CD8-positive, alpha-beta T cell (primary cell): ENCODE measurements at regions of chr6 and their contacts with region 1.

Region 1: GRCh38 chr6:34610819-34611477 is 54.8 kb upstream of the SPDEF start:
- DNase-seq: no peak
- ATAC-seq: no peak
- H3K4me3 ChIP-seq: no peak overlapping the region
- H3K4me3 Mint-ChIP-seq: no peak overlapping the region
- H3K27ac ChIP-seq: no peak overlapping the region
- H3K27ac Mint-ChIP-seq: peak overlapping the region; percentile 10
- H3K4me1 ChIP-seq: no peaks in the 10 kb centered on the region
- H3K4me1 Mint-ChIP-seq: peaks cover 6% of the 10 kb centered on the region
- H3K27me3 ChIP-seq: no peaks in the 10 kb centered on the region
- H3K27me3 Mint-ChIP-seq: no peaks in the 10 kb centered on the region
- CTCF ChIP-seq: no peak

Region 2: GRCh38 chr6:34027445-34027936 is 583.5 kb before region 1 on chr6:
- CTCF ChIA-PET with region 1: no interaction called
- POLR2A ChIA-PET with region 1: no interaction called
- intact Hi-C with region 1: no loop called
- DNase-seq: peak; percentile 29 to 84 (median 64)
- ATAC-seq: peak; percentile 66
- H3K4me3 ChIP-seq: no peak overlapping the region
- H3K4me3 Mint-ChIP-seq: no peak overlapping the region
- H3K27ac ChIP-seq: no peak overlapping the region
- H3K27ac Mint-ChIP-seq: no peak overlapping the region
- H3K4me1 ChIP-seq: no peaks in the 10 kb centered on the region
- H3K4me1 Mint-ChIP-seq: no peaks in the 10 kb centered on the region
- H3K27me3 ChIP-seq: no peaks in the 10 kb centered on the region
- H3K27me3 Mint-ChIP-seq: peaks cover 5% of the 10 kb centered on the region
- CTCF ChIP-seq: peak; percentile 82

Region 3: GRCh38 chr6:34115403-34115795 is 495.5 kb before region 1 on chr6:
- CTCF ChIA-PET with region 1: no interaction called
- POLR2A ChIA-PET with region 1: no interaction called
- intact Hi-C with region 1: no loop called
- DNase-seq: peak in 3 of 9 experiments; percentile 13 to 44 (median 32)
- ATAC-seq: no peak
- H3K4me3 ChIP-seq: no peak overlapping the region
- H3K4me3 Mint-ChIP-seq: no peak overlapping the region
- H3K27ac ChIP-seq: no peak overlapping the region
- H3K27ac Mint-ChIP-seq: no peak overlapping the region
- H3K4me1 ChIP-seq: no peaks in the 10 kb centered on the region
- H3K4me1 Mint-ChIP-seq: peaks cover under 1% of the 10 kb centered on the region
- H3K27me3 ChIP-seq: no peaks in the 10 kb centered on the region
- H3K27me3 Mint-ChIP-seq: peaks cover 29% of the 10 kb centered on the region
- CTCF ChIP-seq: no peak

Region 4: GRCh38 chr6:34161857-34162515 is 449.0 kb before region 1 on chr6:
- CTCF ChIA-PET with region 1: interaction called, 40 read pairs
- POLR2A ChIA-PET with region 1: no interaction called
- intact Hi-C with region 1: loop called (anchors 1 kb)
- DNase-seq: no peak
- ATAC-seq: no peak
- H3K4me3 ChIP-seq: no peak overlapping the region
- H3K4me3 Mint-ChIP-seq: no peak overlapping the region
- H3K27ac ChIP-seq: no peak overlapping the region
- H3K27ac Mint-ChIP-seq: no peak overlapping the region
- H3K4me1 ChIP-seq: no peaks in the 10 kb centered on the region
- H3K4me1 Mint-ChIP-seq: no peaks in the 10 kb centered on the region
- H3K27me3 ChIP-seq: no peaks in the 10 kb centered on the region
- H3K27me3 Mint-ChIP-seq: peaks cover 2% of the 10 kb centered on the region
- CTCF ChIP-seq: no peak

Region 5: GRCh38 chr6:34459899-34460593 is 150.9 kb before region 1 on chr6:
- CTCF ChIA-PET with region 1: interaction called, 166 read pairs
- POLR2A ChIA-PET with region 1: interaction called, 6 read pairs
- intact Hi-C with region 1: loop called in 1 of 2 experiments (anchors 1 kb)
- DNase-seq: peak; percentile 12 to 75 (median 48)
- ATAC-seq: peak; percentile 79
- H3K4me3 ChIP-seq: no peak overlapping the region
- H3K4me3 Mint-ChIP-seq: no peak overlapping the region
- H3K27ac ChIP-seq: no peak overlapping the region
- H3K27ac Mint-ChIP-seq: no peak overlapping the region
- H3K4me1 ChIP-seq: no peaks in the 10 kb centered on the region
- H3K4me1 Mint-ChIP-seq: peaks cover 1% of the 10 kb centered on the region
- H3K27me3 ChIP-seq: peaks cover 0 to 7% of the 10 kb centered on the region in 2 experiments
- H3K27me3 Mint-ChIP-seq: peaks cover 10% of the 10 kb centered on the region
- CTCF ChIP-seq: peak; percentile 63

Region 6: GRCh38 chr6:34526992-34527728 is 83.8 kb before region 1 on chr6:
- CTCF ChIA-PET with region 1: interaction called, 15 read pairs
- POLR2A ChIA-PET with region 1: no interaction called
- intact Hi-C with region 1: loop called (anchors 1 kb)
- DNase-seq: peak; percentile 91 to 99 (median 96)
- ATAC-seq: peak; percentile 98
- H3K4me3 ChIP-seq: peak overlapping the region; percentile 17 to 31
- H3K4me3 Mint-ChIP-seq: peak overlapping the region; percentile 58
- H3K27ac ChIP-seq: peak overlapping the region; percentile 31 to 58
- H3K27ac Mint-ChIP-seq: peak overlapping the region; percentile 80
- H3K4me1 ChIP-seq: peaks cover 7% of the 10 kb centered on the region
- H3K4me1 Mint-ChIP-seq: peaks cover 14% of the 10 kb centered on the region
- H3K27me3 ChIP-seq: no peaks in the 10 kb centered on the region
- H3K27me3 Mint-ChIP-seq: no peaks in the 10 kb centered on the region
- CTCF ChIP-seq: peak; percentile 51

Region 7: DNA sequence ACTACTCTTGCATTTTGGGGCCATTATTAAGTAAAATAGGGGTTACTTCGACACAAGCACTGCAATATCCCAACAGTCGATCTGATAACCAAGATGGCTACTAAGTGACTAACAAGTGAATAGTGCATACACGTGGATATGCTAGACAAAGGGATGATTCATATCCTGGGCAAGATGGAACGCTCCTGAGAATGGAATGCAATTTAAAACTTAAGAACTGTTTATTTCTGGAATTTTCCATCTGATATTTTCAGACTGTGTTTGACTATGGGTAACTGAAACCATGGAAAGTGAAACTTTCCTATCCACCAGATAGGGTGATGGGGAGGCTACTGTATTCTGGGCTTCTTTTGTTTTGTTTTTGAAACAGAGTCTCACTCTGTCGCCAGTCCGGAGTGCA is 19.1 kb after region 1 on chr6:
- CTCF ChIA-PET with region 1: interaction called, 10 read pairs
- POLR2A ChIA-PET with region 1: no interaction called
- intact Hi-C with region 1: no loop called
- DNase-seq: no peak
- ATAC-seq: no peak
- H3K4me3 ChIP-seq: no peak overlapping the region
- H3K4me3 Mint-ChIP-seq: no peak overlapping the region
- H3K27ac ChIP-seq: no peak overlapping the region
- H3K27ac Mint-ChIP-seq: no peak overlapping the region
- H3K4me1 ChIP-seq: no peaks in the 10 kb centered on the region
- H3K4me1 Mint-ChIP-seq: peaks cover 13% of the 10 kb centered on the region
- H3K27me3 ChIP-seq: no peaks in the 10 kb centered on the region
- H3K27me3 Mint-ChIP-seq: no peaks in the 10 kb centered on the region
- CTCF ChIP-seq: no peak

Region 8: GRCh38 chr6:34994693-34995092 is 383.7 kb after region 1 on chr6:
- CTCF ChIA-PET with region 1: no interaction called
- POLR2A ChIA-PET with region 1: no interaction called
- intact Hi-C with region 1: no loop called
- DNase-seq: no peak
- ATAC-seq: no peak
- H3K4me3 ChIP-seq: no peak overlapping the region
- H3K4me3 Mint-ChIP-seq: no peak overlapping the region
- H3K27ac ChIP-seq: no peak overlapping the region
- H3K27ac Mint-ChIP-seq: no peak overlapping the region
- H3K4me1 ChIP-seq: no peaks in the 10 kb centered on the region
- H3K4me1 Mint-ChIP-seq: no peaks in the 10 kb centered on the region
- H3K27me3 ChIP-seq: no peaks in the 10 kb centered on the region
- H3K27me3 Mint-ChIP-seq: no peaks in the 10 kb centered on the region
- CTCF ChIP-seq: no peak